Heart left ventricle (tissue), 16 donors: ENCODE measurements at regions of chr10 and their contacts with region 1.

Region 1: GRCh38 chr10:60434418-60435046 is 44.9 kb upstream of the ANK3 start:
- DNase-seq: peak in 3 of 5 donors; percentile 21 to 32 (median 28)
- ATAC-seq: peak in 3 of 4 donors; percentile 63 to 81 (median 72)
- H3K4me3 ChIP-seq: no peak overlapping the region
- H3K27ac ChIP-seq: no peak overlapping the region
- H3K4me1 ChIP-seq: peaks cover 0 to 28% (median 6%) of the 10 kb centered on the region in 12 donors
- H3K27me3 ChIP-seq: no peaks in the 10 kb centered on the region
- CTCF ChIP-seq: peak; percentile 36 to 78 (median 67)
- POLR2A ChIP-seq: no peak

Region 2: DNA sequence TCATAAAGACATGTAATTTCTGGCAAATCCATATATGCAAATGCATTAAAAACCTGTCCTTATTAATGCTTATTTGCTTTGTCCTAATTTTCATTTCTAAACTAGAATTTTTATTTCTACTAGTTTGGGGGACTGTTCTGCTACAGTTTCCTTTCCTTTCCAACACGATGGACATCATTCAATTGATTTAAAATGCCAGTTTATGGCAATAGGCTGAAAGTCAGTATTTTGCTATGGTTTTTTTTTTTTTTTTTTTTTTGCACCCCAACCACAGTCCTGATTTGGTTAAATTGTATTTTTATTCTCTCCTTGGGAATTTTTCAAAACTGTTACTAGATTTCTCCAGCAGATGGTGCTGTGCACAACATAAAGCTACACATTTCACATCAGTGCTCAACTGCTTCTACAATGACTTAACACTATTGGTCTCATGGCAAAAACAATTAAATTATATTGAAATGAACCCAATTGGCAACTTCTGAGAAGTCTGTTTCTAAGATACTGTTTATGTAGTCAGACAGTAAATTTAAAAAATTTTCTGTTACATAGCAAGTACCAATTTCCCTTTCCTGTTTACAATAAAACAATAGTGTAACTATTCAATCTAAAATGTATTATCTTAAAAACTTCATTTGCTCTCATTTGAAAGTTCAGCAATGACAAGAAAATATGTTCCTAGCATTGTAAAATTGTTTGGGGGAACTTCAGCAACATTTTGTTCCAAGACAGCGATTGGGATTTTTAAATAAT is 334.4 kb before region 1 on chr10:
- intact Hi-C with region 1: loop called in 9 of 10 experiments (anchors 5 to 10 kb)
- DNase-seq: no peak
- ATAC-seq: peak; percentile 35 to 65 (median 54)
- H3K4me3 ChIP-seq: no peak overlapping the region
- H3K27ac ChIP-seq: no peak overlapping the region
- H3K4me1 ChIP-seq: peaks cover 0 to 9% (median 0%) of the 10 kb centered on the region in 12 donors
- H3K27me3 ChIP-seq: no peaks in the 10 kb centered on the region
- CTCF ChIP-seq: peak; percentile 40 to 74 (median 57)
- POLR2A ChIP-seq: no peak

Region 3: DNA sequence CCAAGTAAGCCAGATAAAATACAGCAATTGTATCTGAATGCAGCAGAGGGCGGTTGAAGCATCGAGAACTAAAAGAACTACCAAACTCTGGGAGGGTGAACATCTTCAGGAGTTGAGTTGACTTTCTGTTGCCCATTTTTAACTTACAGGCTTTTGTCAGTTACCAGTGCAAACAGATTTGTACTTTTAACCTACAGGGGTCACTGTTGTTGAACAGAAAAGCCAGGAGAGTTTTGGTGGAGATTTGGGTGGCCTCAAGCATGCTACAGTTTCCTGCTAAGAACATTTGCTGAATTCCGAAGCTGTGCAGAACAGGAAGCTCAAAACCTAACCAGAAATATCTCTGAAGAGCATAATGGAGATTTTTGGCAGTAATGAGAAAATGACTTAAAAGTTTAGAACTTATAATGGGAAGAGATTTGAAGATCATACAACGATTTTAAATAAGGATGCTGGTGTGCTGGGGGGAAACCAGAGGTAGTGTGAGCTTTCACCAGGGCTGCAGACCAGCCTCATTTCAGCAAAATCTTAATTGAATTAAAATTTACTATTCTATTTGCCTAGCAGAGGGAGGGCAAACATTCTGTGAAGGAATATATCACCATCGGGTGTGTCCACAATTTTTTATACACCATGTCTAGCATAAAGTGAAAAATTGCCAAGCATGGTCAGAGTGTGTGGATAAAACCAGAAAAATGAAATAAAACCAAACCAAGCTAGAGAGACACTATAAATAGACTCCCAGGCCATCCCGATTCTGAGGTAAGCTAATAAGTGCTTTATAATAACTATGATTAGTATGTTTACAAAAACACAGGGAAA is 319.6 kb before region 1 on chr10:
- intact Hi-C with region 1: loop called in 2 of 10 experiments (anchors 2 to 5 kb)
- DNase-seq: no peak
- ATAC-seq: peak; percentile 37 to 78 (median 54)
- H3K4me3 ChIP-seq: no peak overlapping the region
- H3K27ac ChIP-seq: no peak overlapping the region
- H3K4me1 ChIP-seq: peaks cover 0 to 10% (median 0%) of the 10 kb centered on the region in 12 donors
- H3K27me3 ChIP-seq: no peaks in the 10 kb centered on the region
- CTCF ChIP-seq: peak; percentile 14 to 60 (median 46)
- POLR2A ChIP-seq: no peak

Region 4: GRCh38 chr10:60208676-60209269 is 225.8 kb before region 1 on chr10:
- intact Hi-C with region 1: loop called (anchors 5 to 10 kb)
- DNase-seq: no peak
- ATAC-seq: peak in 2 of 4 donors; percentile 27 to 53
- H3K4me3 ChIP-seq: no peak overlapping the region
- H3K27ac ChIP-seq: no peak overlapping the region
- H3K4me1 ChIP-seq: peaks cover 0 to 11% (median 5%) of the 10 kb centered on the region in 12 donors
- H3K27me3 ChIP-seq: no peaks in the 10 kb centered on the region
- CTCF ChIP-seq: peak; percentile 28 to 75 (median 58)
- POLR2A ChIP-seq: no peak

Region 5: DNA sequence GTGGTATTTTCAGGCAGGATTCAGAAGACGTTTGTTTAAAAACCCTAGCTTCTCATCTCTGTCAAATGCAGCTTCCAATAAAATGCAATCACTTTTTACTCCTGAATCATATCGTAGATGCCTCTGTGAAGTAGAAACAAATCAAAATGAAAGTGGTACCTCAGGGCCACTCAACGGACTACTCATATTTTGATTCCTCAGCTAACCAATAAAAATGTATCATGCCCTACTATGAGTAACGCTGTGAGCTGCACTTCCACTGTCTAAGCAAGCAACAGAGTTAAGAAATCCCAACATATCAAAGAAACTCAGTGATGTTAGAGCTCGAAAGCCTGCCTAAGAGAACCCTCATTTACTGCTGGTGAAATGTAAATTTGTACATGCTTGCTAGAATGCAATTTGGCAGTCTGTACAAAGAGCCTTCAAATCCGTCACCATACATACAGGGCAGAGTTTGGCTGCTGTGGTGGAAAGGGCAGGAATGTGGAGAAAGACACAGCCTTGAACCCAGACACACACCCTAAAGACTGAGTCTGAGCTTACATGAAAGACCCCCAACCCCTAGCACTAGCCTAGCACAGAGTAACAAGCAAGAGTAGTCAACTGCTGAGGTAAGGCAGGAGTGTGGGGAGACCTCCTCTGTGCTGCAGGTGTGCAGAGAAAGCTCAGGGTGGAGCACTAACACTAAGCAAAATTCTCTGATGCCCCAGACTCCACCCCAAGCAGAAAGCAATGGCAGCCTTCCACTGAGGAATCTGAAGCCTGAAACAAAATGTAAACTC is 196.4 kb before region 1 on chr10:
- intact Hi-C with region 1: loop called (anchors 2 to 10 kb)
- DNase-seq: peak in 3 of 5 donors; percentile 10 to 35 (median 23)
- ATAC-seq: peak; percentile 66 to 83 (median 78)
- H3K4me3 ChIP-seq: peak overlapping the region in 2 of 12 donors; percentile 17 to 27
- H3K27ac ChIP-seq: peak overlapping the region in 10 of 12 donors; percentile 14 to 84 (median 72)
- H3K4me1 ChIP-seq: peaks cover 0 to 36% (median 24%) of the 10 kb centered on the region in 12 donors
- H3K27me3 ChIP-seq: no peaks in the 10 kb centered on the region
- CTCF ChIP-seq: peak in 9 of 12 donors; percentile 15 to 46 (median 27)
- POLR2A ChIP-seq: no peak